CD4-positive, alpha-beta memory T cell (primary cell): ENCODE measurements at regions of chr1 and their contacts with region 1.

Region 1: DNA sequence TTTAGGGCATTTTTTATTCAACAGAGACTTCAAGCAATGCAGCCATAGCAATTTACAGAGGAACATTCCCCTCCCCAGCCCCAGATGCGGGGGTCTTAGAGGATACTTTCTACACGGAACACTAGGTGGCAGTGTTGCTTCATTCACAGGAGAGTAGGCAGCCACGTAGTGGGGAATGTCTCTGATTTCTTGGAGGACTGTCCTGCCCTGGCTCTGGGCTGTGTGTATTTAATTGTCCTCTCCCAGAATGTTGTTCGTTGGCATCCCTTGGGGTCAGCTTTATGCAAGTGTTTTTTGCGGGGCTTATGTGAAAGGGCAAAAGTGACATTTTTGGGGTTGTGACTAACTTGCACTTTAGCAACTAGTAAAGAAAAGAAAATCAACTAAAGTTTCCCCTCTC is 96.9 kb downstream of the PAPPA2 start:
- DNase-seq: no peak
- H3K4me3 ChIP-seq: no peak overlapping the region
- H3K4me3 Mint-ChIP-seq: no peak overlapping the region
- H3K27ac ChIP-seq: no peak overlapping the region
- H3K27ac Mint-ChIP-seq: no peak overlapping the region
- H3K4me1 ChIP-seq: no peaks in the 10 kb centered on the region
- H3K4me1 Mint-ChIP-seq: peaks cover 0 to 1% (median 0%) of the 10 kb centered on the region in 4 donors
- H3K27me3 ChIP-seq: no peaks in the 10 kb centered on the region
- H3K27me3 Mint-ChIP-seq: no peaks in the 10 kb centered on the region

Region 2: DNA sequence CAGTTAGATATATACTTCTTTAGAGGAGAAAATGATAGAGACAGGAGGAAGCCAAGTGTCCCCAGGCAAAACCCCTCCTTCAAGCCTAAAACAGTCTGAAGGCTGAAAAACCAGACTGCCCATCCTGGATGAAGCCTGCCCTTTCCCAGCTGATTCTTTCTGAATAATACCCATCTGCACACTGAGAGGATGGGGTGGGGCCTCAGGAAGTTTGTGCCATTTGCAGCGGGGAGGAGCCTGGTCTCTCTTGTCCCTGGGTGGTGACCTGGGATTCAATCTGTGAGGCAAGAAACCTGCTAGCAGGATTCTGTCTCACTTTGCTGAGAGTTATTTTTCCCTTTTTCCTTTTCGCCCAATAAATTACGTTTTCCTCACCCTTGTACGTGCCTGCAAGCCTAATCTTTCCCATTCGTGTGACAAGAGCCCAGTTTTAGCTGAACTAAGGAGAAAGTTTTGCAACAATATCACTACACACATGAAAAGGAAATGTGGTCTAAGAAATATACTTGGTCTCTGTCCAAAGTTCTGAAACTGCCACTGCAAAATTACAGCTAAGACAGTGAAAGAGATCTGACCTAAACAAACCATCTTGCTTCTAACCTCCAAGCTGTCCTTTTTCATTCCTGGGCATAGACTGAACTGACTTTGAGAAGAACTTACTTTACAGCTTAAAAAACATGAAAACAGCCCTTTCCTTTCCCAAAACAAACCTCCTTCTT is 457.8 kb before region 1 on chr1:
- CTCF ChIA-PET with region 1: no interaction called
- POLR2A ChIA-PET with region 1: no interaction called
- intact Hi-C with region 1: no loop called
- DNase-seq: no peak
- H3K4me3 ChIP-seq: no peak overlapping the region
- H3K4me3 Mint-ChIP-seq: peak overlapping the region in 1 of 8 donors; percentile 22
- H3K27ac ChIP-seq: no peak overlapping the region
- H3K27ac Mint-ChIP-seq: peak overlapping the region in 1 of 7 donors; percentile 41
- H3K4me1 ChIP-seq: no peaks in the 10 kb centered on the region
- H3K4me1 Mint-ChIP-seq: peaks cover 0 to 6% (median 3%) of the 10 kb centered on the region in 4 donors
- H3K27me3 ChIP-seq: no peaks in the 10 kb centered on the region
- H3K27me3 Mint-ChIP-seq: no peaks in the 10 kb centered on the region

Region 3: GRCh38 chr1:176880954-176881595 is 321.2 kb after region 1 on chr1:
- CTCF ChIA-PET with region 1: no interaction called
- POLR2A ChIA-PET with region 1: no interaction called
- intact Hi-C with region 1: loop called (anchors 5 kb)
- DNase-seq: no peak
- H3K4me3 ChIP-seq: no peak overlapping the region
- H3K4me3 Mint-ChIP-seq: no peak overlapping the region
- H3K27ac ChIP-seq: no peak overlapping the region
- H3K27ac Mint-ChIP-seq: no peak overlapping the region
- H3K4me1 ChIP-seq: no peaks in the 10 kb centered on the region
- H3K4me1 Mint-ChIP-seq: no peaks in the 10 kb centered on the region
- H3K27me3 ChIP-seq: no peaks in the 10 kb centered on the region
- H3K27me3 Mint-ChIP-seq: peaks cover 4 to 6% of the 10 kb centered on the region in 2 donors